PC-9 (cell line): ENCODE measurements at regions of chr18 and their contacts with region 1.

Region 1: DNA sequence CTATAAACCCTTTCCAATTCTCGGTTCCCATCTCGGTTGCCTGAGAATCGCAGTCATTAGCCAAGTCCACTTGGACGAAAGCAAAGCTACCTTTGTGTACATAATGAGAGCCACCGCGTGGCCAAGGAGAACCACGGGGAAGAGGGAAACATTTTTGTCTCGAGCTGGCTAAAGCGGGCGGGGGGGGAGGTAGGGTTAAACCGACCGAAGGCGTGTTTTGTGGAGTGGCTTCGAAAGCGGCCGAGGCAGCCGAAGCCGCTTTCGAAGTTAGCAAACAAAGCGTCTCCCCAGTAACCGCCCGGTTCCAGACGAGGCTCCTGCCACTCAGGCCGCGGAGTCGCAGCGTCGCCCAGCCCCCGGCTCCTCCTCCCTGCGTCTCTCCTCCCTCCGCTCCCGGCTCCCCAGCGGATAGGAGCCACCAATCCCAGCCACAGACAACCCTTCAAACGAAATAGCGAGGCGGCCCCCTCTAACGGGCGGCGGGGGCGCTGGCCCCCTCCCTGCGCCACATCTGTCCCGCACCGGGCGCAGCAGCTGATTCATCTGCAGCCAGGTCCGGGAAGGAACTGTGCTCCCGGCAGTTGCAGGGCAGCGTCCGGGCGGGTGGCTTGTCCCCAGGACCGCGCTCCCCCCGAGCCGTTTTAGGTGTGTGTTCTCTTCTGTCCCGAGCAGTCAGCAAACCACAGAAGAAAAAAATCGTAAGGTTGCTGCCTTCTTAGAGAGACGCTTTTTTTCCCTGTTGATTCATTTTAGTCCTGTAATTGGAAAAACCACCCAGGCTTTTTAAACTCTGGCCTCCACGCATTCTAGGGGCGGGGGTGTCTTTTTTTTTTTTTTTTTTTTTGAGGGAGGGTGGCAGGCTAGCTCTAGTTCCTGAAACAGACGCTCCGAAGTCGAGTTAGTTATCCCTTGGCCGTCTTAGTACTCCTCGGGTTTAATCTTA is 1.8 kb upstream of the TGIF1 start:
- DNase-seq: peak; percentile 95 to 98
- H3K4me3 ChIP-seq: peak overlapping the region; percentile 83
- H3K27ac ChIP-seq: peak overlapping the region; percentile 96
- H3K4me1 ChIP-seq: peaks cover 35% of the 10 kb centered on the region
- H3K27me3 ChIP-seq: no peaks in the 10 kb centered on the region
- CTCF ChIP-seq: no peak; the same call in 1 of the 2 replicates

Region 2: GRCh38 chr18:2932247-2933181 is 515.7 kb before region 1 on chr18:
- CTCF ChIA-PET with region 1: interaction called, 5 read pairs
- POLR2A ChIA-PET with region 1: no interaction called
- intact Hi-C with region 1: loop called (anchors 10 kb)
- DNase-seq: peak; percentile 32 to 52
- H3K4me3 ChIP-seq: no peak overlapping the region
- H3K27ac ChIP-seq: no peak overlapping the region
- H3K4me1 ChIP-seq: no peaks in the 10 kb centered on the region
- H3K27me3 ChIP-seq: no peaks in the 10 kb centered on the region
- CTCF ChIP-seq: peak; percentile 89

Region 3: DNA sequence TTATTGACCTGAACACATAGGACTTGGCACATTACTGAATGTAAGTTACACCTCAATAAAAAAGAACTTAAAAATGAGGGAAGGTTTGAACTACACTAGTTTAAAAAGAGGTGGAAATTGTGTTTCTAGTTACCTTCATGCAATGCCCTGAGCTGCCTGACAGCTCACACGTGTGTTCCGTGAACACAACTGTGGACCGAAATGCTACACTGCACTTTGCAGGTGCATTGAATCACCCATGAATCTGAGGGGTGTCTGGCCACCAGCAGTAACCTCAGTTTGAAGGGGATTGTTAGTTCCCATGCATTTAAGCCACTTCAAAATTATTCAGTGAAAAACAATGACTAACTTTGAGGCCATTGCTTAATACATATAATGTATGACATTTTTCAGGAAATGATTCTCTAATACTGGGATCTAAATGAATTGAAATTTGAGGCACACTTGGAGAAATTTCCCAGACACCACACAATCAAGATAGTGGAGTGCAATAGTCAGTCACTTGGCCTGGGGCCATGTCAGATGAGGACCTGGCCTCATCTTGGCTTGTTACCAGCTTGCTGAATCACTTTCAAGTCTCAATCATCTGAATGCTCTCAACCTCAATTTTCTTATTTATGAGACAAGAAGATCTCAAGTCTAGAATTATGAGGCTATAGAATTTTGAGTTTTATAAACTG is 126.9 kb before region 1 on chr18:
- CTCF ChIA-PET with region 1: no interaction called
- POLR2A ChIA-PET with region 1: interaction called, 4 read pairs
- intact Hi-C with region 1: loop called (anchors 1 kb)
- DNase-seq: peak; percentile 88 to 93
- H3K4me3 ChIP-seq: no peak overlapping the region
- H3K27ac ChIP-seq: peak overlapping the region; percentile 74
- H3K4me1 ChIP-seq: peaks cover 32% of the 10 kb centered on the region
- H3K27me3 ChIP-seq: no peaks in the 10 kb centered on the region
- CTCF ChIP-seq: no peak

Region 4: GRCh38 chr18:3411854-3412268 is 36.3 kb before region 1 on chr18:
- CTCF ChIA-PET with region 1: interaction called, 17 read pairs
- POLR2A ChIA-PET with region 1: interaction called, 13 read pairs
- intact Hi-C with region 1: loop called (anchors 1 kb)
- DNase-seq: peak; percentile 72 to 86
- H3K4me3 ChIP-seq: peak overlapping the region; percentile 68
- H3K27ac ChIP-seq: peak overlapping the region; percentile 96
- H3K4me1 ChIP-seq: peaks cover 58% of the 10 kb centered on the region
- H3K27me3 ChIP-seq: no peaks in the 10 kb centered on the region
- CTCF ChIP-seq: no peak

Region 5: GRCh38 chr18:3652380-3653262 is 204.5 kb after region 1 on chr18:
- CTCF ChIA-PET with region 1: interaction called, 5 read pairs
- POLR2A ChIA-PET with region 1: interaction called, 17 read pairs
- intact Hi-C with region 1: loop called (anchors 1 kb)
- DNase-seq: peak; percentile 97 to 99
- H3K4me3 ChIP-seq: peak overlapping the region; percentile 63
- H3K27ac ChIP-seq: peak overlapping the region; percentile 99
- H3K4me1 ChIP-seq: peaks cover 80% of the 10 kb centered on the region
- H3K27me3 ChIP-seq: no peaks in the 10 kb centered on the region
- CTCF ChIP-seq: 0 out of 2 replicates have a peak, but pooled peaks have one; percentile 19

Region 6: GRCh38 chr18:3823073-3823472 is 374.9 kb after region 1 on chr18:
- CTCF ChIA-PET with region 1: interaction called, 10 read pairs
- POLR2A ChIA-PET with region 1: no interaction called
- intact Hi-C with region 1: no loop called
- DNase-seq: no peak
- H3K4me3 ChIP-seq: no peak overlapping the region
- H3K27ac ChIP-seq: no peak overlapping the region
- H3K4me1 ChIP-seq: no peaks in the 10 kb centered on the region
- H3K27me3 ChIP-seq: no peaks in the 10 kb centered on the region
- CTCF ChIP-seq: no peak

Region 7: DNA sequence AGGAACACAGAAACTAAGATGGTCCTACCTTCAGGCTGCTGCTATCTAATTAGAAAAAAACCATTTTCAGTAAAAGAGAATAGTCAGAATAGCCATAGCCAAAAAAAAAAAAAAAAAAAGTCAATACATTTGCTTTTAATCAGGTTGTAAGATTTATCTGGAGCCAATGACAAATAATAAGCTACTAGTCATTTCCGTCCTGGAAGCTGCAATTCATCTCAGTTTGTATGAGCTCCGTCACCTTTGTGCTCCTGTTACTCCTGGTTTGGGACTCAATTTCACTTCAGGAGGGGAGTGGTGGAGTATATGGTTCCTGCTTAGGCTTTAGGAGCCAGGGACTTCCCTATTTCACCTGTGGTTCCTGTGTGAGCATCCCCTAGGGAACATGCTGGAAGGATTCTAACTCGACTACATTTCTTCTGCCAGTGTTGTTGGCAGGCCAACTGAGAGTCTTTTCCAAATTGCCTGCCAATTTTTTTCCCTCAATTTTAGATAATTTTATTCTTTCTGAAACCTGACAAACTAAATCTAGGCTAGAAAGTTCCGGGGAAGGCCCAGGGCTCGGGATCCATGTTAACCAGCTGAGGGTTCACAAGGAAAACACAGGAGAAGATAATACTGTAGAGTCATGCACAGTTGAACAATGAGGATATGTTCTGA is 525.2 kb after region 1 on chr18:
- CTCF ChIA-PET with region 1: no interaction called
- POLR2A ChIA-PET with region 1: interaction called, 27 read pairs
- intact Hi-C with region 1: no loop called
- DNase-seq: no peak
- H3K4me3 ChIP-seq: no peak overlapping the region
- H3K27ac ChIP-seq: no peak overlapping the region
- H3K4me1 ChIP-seq: no peaks in the 10 kb centered on the region
- H3K27me3 ChIP-seq: no peaks in the 10 kb centered on the region
- CTCF ChIP-seq: no peak